Heart left ventricle (tissue), 16 donors: ENCODE measurements at regions of chr5 and their contacts with region 1.

Region 1: DNA sequence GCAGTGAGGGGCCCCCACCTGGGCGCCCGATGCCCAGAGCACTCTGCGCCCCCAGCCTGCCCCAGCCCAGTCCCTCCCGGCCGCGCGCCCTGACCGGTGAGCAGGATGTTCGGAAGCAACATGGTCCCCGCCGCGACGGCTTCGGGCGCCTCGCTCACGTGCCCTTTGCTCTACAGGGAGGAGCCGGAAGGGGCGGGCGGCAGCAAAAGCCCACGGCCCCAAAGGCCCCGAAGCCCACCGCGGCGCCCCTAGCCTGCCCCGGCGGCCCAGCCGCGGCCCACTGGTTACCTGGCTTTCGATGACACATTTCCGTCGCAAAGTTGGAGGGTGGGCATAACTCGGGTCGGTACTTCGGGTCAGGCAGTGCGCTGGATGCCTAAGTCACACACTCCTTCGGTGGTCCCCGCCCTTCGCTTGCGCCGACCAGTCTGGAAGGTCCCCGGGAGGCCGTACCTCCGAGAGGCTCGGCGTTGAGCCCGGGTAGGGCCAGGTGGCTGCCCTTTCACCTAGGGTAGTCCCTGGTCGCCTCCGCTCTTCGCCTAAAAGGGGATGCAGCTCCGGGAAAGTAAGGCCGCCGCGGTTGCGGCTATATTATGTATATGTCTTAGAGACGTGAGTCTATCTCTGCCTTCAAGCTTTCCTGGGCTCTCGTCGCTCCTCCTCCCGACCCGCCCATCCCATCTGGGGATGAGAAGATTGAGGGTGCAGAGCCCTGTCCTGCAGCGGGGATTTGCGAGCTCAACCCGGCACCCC is at the starts of genes AK6, RAD17 and TAF9:
- DNase-seq: peak; percentile 92 to 96 (median 95)
- ATAC-seq: peak; percentile 97 to 99 (median 98)
- H3K4me3 ChIP-seq: peak within 1 kb of the TSS; percentile 54 to 94 (median 80)
- H3K27ac ChIP-seq: peak within 1 kb of the TSS; percentile 93 to 99 (median 98)
- H3K4me1 ChIP-seq: peaks cover 4 to 44% (median 25%) of the 10 kb centered on the region in 12 donors
- H3K27me3 ChIP-seq: no peaks in the 10 kb centered on the region
- CTCF ChIP-seq: peak in 1 of 12 donors; percentile 10
- POLR2A ChIP-seq: peak in 1 of 2 donors; percentile 66
- total RNA-seq, gene AK6: 26.2 to 43.8 (median 34.5) TPM
- total RNA-seq, gene RAD17: 17.4 to 25.8 (median 20.9) TPM
- total RNA-seq, gene TAF9: 37.8 to 51.9 (median 48.0) TPM

Region 2: GRCh38 chr5:69042915-69043658 is 326.5 kb before region 1 on chr5:
- intact Hi-C with region 1: loop called in 1 of 10 experiments (anchors 10 kb)
- DNase-seq: peak in 4 of 5 donors; percentile 49 to 78 (median 66)
- ATAC-seq: peak; percentile 93 to 96 (median 95)
- H3K4me3 ChIP-seq: peak overlapping the region; percentile 24 to 67 (median 52)
- H3K27ac ChIP-seq: peak overlapping the region; percentile 51 to 84 (median 74)
- H3K4me1 ChIP-seq: peaks cover 0 to 6% (median 0%) of the 10 kb centered on the region in 12 donors
- H3K27me3 ChIP-seq: no peaks in the 10 kb centered on the region
- CTCF ChIP-seq: peak; percentile 81 to 96 (median 90)
- POLR2A ChIP-seq: no peak

Region 3: DNA sequence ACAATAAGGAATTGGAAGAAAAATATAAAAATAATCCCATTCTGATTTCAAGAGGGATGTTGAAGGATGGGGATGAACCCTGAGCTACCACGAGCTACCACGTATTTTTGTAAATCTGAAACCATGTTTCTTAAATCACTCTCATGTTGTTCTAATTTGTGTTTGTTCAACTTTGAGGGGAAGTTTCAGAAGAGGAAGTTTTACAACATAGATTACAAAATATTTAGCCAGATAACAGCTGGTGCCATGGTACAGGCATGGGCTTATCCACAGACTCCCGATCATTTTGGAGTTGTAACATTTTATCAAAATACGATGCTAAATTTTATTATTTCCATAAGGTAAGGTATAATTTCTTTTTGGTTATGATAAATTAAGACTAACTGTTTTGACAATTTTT is 52.2 kb before region 1 on chr5:
- intact Hi-C with region 1: loop called in 1 of 10 experiments (anchors 10 kb)
- DNase-seq: no peak
- ATAC-seq: no peak
- H3K4me3 ChIP-seq: no peak overlapping the region
- H3K27ac ChIP-seq: peak overlapping the region in 1 of 12 donors; percentile 15
- H3K4me1 ChIP-seq: no peaks in the 10 kb centered on the region
- H3K27me3 ChIP-seq: no peaks in the 10 kb centered on the region
- CTCF ChIP-seq: no peak
- POLR2A ChIP-seq: no peak